ENCODE measurements at regions of chr5 and their contacts with region 1.

Region 1: DNA sequence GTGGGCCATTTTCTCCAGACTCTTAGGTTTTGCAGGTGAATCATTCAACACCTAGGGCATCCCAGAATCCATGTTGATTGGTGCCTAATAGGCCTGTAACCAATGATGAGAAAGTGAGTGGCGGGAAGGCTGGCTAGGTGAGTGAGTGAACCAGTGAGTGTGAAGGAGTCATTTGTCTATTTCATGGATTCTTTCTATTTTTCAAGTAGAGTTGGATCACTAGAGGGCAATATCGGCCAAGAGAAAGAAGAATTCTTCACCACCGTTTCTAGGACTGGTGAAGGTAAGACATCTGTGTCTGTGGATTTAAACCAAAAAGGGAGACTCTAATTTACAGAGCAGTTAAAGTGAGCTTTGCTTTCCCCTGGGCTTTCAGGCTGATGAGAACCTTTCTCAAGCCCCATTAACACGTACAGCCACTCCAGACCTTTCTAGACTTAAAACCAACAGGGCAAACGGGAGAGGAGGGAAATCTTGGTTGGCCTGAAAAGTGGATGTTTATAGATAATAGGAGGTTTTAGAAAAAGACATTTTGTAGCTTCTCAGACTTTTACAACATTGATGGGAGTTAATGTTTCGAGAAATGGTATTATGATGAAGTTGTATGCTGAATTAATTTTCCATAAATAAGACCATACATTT is 114.3 kb upstream of the IL12B start:
- DNase-seq: peak; percentile 78
- H3K4me3 Mint-ChIP-seq: no peak overlapping the region
- H3K27ac Mint-ChIP-seq: no peak overlapping the region
- H3K4me1 Mint-ChIP-seq: peaks cover 11% of the 10 kb centered on the region
- H3K27me3 Mint-ChIP-seq: no peaks in the 10 kb centered on the region
- CTCF ChIP-seq: peak; percentile 84

Region 2: DNA sequence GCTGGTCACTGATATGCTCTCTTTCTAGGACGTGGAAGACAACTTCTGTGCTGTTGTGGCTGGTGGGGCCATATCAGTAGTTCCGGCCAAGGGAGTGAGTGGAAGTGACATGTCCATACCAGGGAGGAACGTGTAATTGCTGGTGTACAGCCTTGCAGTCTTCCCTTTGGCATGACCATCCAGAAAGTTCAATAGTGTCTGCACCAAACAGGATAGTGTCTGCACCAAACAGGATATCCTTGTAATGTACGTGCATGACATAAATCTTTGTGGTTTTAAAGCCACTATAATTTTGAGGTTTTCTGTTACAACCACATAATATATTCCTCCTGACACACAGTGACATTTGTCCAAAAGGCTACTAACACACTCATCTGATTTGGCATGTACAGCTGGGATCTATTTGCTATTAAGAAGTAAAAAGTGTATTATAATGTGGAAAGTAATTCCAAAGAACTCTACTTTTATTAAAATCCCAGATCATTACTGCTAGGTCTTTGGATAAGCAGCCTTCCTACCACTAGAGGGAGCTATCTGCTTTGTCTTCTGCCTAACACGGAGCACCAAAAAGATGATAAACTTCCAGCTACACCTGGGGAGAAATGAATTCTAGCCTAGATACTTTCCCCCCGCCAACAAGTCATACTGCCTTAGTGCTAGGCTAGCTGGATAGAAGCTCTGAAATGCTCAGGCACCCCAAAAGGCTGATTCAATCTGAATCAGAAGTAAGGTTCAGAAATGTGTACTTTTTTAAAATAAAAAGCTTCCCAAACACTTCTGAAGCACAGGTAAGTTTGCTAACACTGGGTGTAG is 287.9 kb before region 1 on chr5:
- CTCF ChIA-PET with region 1: interaction called, 3 read pairs
- POLR2A ChIA-PET with region 1: no interaction called
- intact Hi-C with region 1: loop called (anchors 2 kb)
- DNase-seq: peak; percentile 87
- H3K4me3 Mint-ChIP-seq: no peak overlapping the region
- H3K27ac Mint-ChIP-seq: peak overlapping the region; percentile 28
- H3K4me1 Mint-ChIP-seq: peaks cover 12% of the 10 kb centered on the region
- H3K27me3 Mint-ChIP-seq: no peaks in the 10 kb centered on the region
- CTCF ChIP-seq: peak; percentile 88

Region 3: GRCh38 chr5:159392871-159393270 is 51.7 kb before region 1 on chr5:
- CTCF ChIA-PET with region 1: no interaction called
- POLR2A ChIA-PET with region 1: no interaction called
- intact Hi-C with region 1: no loop called
- DNase-seq: no peak
- H3K4me3 Mint-ChIP-seq: no peak overlapping the region
- H3K27ac Mint-ChIP-seq: no peak overlapping the region
- H3K4me1 Mint-ChIP-seq: no peaks in the 10 kb centered on the region
- H3K27me3 Mint-ChIP-seq: no peaks in the 10 kb centered on the region
- CTCF ChIP-seq: no peak

Region 4: GRCh38 chr5:159405611-159406031 is 38.9 kb before region 1 on chr5:
- CTCF ChIA-PET with region 1: no interaction called
- POLR2A ChIA-PET with region 1: no interaction called
- intact Hi-C with region 1: no loop called
- DNase-seq: no peak
- H3K4me3 Mint-ChIP-seq: no peak overlapping the region
- H3K27ac Mint-ChIP-seq: no peak overlapping the region
- H3K4me1 Mint-ChIP-seq: peaks cover 20% of the 10 kb centered on the region
- H3K27me3 Mint-ChIP-seq: no peaks in the 10 kb centered on the region
- CTCF ChIP-seq: no peak

Region 5: DNA sequence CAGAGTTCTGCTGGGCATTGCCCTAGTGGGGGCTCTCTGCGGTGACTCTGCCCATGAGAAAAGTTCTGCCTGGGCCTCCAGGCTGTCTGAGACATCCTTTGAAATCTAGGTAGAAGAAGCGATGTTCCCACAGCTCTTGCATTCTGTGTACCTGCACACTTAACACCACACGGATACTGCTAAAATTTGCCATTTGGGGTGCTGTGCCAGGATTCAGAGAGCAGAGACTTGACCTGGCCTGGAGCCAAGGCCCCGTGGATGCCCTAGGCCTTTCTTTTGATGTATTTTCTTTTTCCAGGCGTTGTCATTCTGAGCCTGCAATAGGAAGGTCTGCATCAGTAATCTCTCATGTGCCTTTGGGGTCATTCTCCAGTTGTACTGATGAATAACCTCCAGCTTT is 25.0 kb before region 1 on chr5:
- CTCF ChIA-PET with region 1: interaction called, 17 read pairs
- POLR2A ChIA-PET with region 1: no interaction called
- intact Hi-C with region 1: no loop called
- DNase-seq: peak; percentile 65
- H3K4me3 Mint-ChIP-seq: no peak overlapping the region
- H3K27ac Mint-ChIP-seq: no peak overlapping the region
- H3K4me1 Mint-ChIP-seq: no peaks in the 10 kb centered on the region
- H3K27me3 Mint-ChIP-seq: no peaks in the 10 kb centered on the region
- CTCF ChIP-seq: no peak

Region 6: GRCh38 chr5:159581502-159582249 is 137.1 kb after region 1 on chr5:
- CTCF ChIA-PET with region 1: interaction called, 8 read pairs
- POLR2A ChIA-PET with region 1: no interaction called
- intact Hi-C with region 1: loop called (anchors 1 kb)
- DNase-seq: peak; percentile 100
- H3K4me3 Mint-ChIP-seq: no peak overlapping the region
- H3K27ac Mint-ChIP-seq: peak overlapping the region; percentile 91
- H3K4me1 Mint-ChIP-seq: peaks cover 29% of the 10 kb centered on the region
- H3K27me3 Mint-ChIP-seq: no peaks in the 10 kb centered on the region
- CTCF ChIP-seq: no peak

Region 7: GRCh38 chr5:159965031-159965837 is 520.7 kb after region 1 on chr5:
- CTCF ChIA-PET with region 1: interaction called, 37 read pairs
- POLR2A ChIA-PET with region 1: no interaction called
- intact Hi-C with region 1: loop called (anchors 1 kb)
- DNase-seq: peak; percentile 86
- H3K4me3 Mint-ChIP-seq: no peak overlapping the region
- H3K27ac Mint-ChIP-seq: no peak overlapping the region
- H3K4me1 Mint-ChIP-seq: peaks cover 7% of the 10 kb centered on the region
- H3K27me3 Mint-ChIP-seq: no peaks in the 10 kb centered on the region
- CTCF ChIP-seq: peak; percentile 87

Region 8: GRCh38 chr5:160342403-160342941 is 897.9 kb after region 1 on chr5:
- CTCF ChIA-PET with region 1: interaction called, 5 read pairs
- POLR2A ChIA-PET with region 1: no interaction called
- intact Hi-C with region 1: loop called (anchors 1 kb)
- DNase-seq: peak; percentile 72
- H3K4me3 Mint-ChIP-seq: no peak overlapping the region
- H3K27ac Mint-ChIP-seq: no peak overlapping the region
- H3K4me1 Mint-ChIP-seq: no peaks in the 10 kb centered on the region
- H3K27me3 Mint-ChIP-seq: no peaks in the 10 kb centered on the region
- CTCF ChIP-seq: no peak

Measured in MCF 10A (cell line).